G401 (cell line): ENCODE measurements at regions of chr7 and their contacts with region 1.

Region 1: DNA sequence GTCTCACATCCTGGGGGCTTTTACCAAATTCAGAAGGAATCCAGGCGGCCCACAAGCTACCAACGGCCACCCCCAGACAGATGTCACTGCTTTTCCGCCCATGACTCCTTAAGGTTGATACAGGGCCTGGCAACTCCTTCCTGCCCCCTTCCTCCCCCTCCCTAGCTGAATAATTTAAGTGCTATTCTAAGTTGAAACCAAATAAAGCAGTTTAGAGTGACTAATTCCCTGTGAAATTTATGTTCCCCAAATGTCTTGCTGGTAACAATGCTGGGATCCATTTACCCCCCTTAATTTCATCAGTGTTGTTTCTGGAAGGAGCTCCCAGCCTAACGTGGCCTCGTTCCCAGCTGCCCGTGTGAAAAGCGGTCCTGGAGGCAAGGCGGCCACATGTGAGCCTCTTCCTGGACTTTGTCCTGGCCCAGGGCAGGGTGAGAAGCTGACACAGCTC is 109.6 kb downstream of the TMEM130 start:
- DNase-seq: no peak

Region 2: DNA sequence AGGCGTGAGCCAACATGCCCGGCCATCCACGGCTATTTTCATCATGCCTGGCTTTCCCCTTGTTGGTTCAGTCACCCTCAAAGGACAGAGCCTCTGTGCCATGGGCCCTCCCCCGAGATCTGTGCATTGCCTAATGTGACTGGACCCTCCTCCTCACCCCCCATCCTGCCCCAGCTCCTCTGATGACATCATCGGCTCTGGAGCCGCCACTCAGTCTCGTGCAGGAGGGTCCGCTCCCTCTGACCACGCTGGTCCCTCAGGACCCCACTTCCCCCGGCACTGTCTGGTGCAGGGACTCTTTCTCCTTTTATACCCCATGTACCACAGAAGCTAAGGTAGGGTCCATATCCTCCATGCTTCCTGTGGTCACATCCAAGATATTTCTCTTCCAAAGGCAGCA is 326.1 kb before region 1 on chr7:
- in situ Hi-C with region 1: no loop called
- DNase-seq: no peak

Region 3: GRCh38 chr7:98500764-98501163 is 259.5 kb before region 1 on chr7:
- in situ Hi-C with region 1: no loop called
- DNase-seq: no peak

Region 4: DNA sequence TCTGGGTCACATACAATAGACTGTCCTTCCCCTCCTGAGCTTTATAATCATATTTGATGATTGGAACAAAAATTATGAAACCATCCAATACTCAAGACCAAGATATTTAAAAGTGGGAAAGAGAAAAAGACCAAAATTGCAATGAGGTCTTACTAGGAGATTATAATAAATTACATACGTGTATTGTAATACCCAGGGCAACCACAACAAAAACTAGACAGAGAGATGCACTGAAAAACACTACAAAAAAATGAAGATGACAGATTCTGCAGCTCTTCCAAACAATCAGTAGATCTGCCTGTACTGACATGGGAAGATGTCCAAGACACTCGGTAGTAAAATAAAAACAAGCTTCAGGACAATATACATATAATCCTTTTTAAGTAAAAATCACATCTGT is 109.8 kb before region 1 on chr7:
- in situ Hi-C with region 1: loop called (anchors 5 kb)
- DNase-seq: no peak

Region 5: GRCh38 chr7:98719396-98719795 is 40.8 kb before region 1 on chr7:
- in situ Hi-C with region 1: no loop called
- DNase-seq: no peak

Region 6: GRCh38 chr7:99447943-99448342 is 687.7 kb after region 1 on chr7:
- in situ Hi-C with region 1: no loop called
- DNase-seq: no peak